Prostate gland (tissue), 2 donors: ENCODE measurements at regions of chr13 and their contacts with region 1.

Region 1: DNA sequence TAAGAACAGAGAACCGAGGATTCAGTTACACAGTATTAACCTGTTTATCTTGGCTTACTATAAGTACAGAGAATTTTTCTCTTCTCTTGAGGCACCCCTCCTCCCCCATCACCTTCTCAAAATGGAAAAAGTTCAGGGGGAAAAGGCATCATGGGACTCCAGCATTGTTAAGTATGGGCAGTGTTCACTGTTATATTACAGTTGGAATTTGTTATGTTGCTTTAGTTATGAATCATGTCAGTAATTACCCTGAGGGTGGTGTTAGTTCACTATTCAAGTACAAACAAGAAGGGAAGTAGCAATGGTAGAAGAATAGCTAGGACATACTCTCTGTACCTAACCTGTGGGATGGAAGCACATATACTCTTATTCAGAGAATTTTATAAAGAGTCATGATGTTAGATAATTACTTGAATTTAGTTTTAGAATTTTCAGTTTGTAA is 12.0 kb downstream of the LPAR6 start:
- DNase-seq: peak; percentile 27
- H3K4me3 ChIP-seq: no peak overlapping the region
- H3K27ac ChIP-seq: peak overlapping the region; percentile 69 to 72
- H3K4me1 ChIP-seq: peaks cover 11% of the 10 kb centered on the region
- H3K27me3 ChIP-seq: no peaks in the 10 kb centered on the region
- CTCF ChIP-seq: peak in 1 of 4 experiments; percentile 29
- POLR2A ChIP-seq: peak; percentile 34

Region 2: GRCh38 chr13:48431987-48432615 is 31.2 kb after region 1 on chr13:
- intact Hi-C with region 1: loop called (anchors 2 kb)
- DNase-seq: no peak
- H3K4me3 ChIP-seq: no peak overlapping the region
- H3K27ac ChIP-seq: peak overlapping the region; percentile 22 to 62
- H3K4me1 ChIP-seq: peaks cover 4% of the 10 kb centered on the region
- H3K27me3 ChIP-seq: no peaks in the 10 kb centered on the region
- CTCF ChIP-seq: no peak
- POLR2A ChIP-seq: no peak

Region 3: GRCh38 chr13:48457578-48458242 is 56.8 kb after region 1 on chr13:
- intact Hi-C with region 1: no loop called
- DNase-seq: no peak
- H3K4me3 ChIP-seq: no peak overlapping the region
- H3K27ac ChIP-seq: no peak overlapping the region
- H3K4me1 ChIP-seq: no peaks in the 10 kb centered on the region
- H3K27me3 ChIP-seq: no peaks in the 10 kb centered on the region
- CTCF ChIP-seq: no peak
- POLR2A ChIP-seq: no peak

Region 4: GRCh38 chr13:48492470-48493065 is 91.7 kb after region 1 on chr13:
- intact Hi-C with region 1: no loop called
- DNase-seq: peak; percentile 30
- H3K4me3 ChIP-seq: no peak overlapping the region
- H3K27ac ChIP-seq: peak overlapping the region; percentile 50 to 54
- H3K4me1 ChIP-seq: no peaks in the 10 kb centered on the region
- H3K27me3 ChIP-seq: no peaks in the 10 kb centered on the region
- CTCF ChIP-seq: no peak
- POLR2A ChIP-seq: no peak

Region 5: DNA sequence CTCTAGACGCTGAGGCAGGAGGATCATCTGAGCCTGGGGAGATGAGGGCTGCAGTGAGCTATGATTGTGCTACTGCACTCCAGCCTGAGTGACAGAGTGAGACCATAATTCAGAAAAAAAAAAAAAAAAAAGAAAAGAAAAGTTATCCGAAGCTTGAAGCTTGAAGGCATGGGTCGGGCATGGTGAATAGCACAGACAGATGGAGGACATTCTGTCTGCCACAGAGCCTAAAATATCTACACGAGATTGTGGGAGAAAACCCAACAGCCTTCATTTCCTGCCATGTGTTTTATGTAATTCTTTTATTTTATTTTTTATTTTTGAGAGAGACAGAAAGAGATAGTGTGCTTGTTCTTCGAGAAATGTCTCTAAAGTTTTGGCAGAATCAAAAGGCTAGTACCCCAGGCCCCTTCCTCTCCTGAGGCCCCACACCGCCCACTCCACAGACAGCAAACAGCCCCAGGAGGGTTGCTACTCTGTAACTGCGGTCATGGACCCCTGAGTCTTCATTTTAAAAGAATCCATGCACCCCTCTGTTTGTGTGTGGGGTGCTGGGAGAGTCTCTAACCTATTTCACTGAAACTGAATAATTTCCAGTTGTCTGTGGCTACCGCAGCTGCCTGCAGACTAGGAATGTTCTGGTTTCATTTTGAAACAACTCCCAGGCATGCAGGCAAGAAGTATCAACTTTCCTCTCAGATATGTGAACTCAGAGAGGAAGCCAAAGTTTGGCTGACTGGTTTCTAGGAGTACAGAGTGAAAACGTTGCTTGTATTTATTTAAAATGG is 170.4 kb after region 1 on chr13:
- intact Hi-C with region 1: loop called (anchors 5 kb)
- DNase-seq: no peak
- H3K4me3 ChIP-seq: no peak overlapping the region
- H3K27ac ChIP-seq: peak overlapping the region; percentile 67 to 71
- H3K4me1 ChIP-seq: no peaks in the 10 kb centered on the region
- H3K27me3 ChIP-seq: no peaks in the 10 kb centered on the region
- CTCF ChIP-seq: no peak
- POLR2A ChIP-seq: no peak

Region 6: DNA sequence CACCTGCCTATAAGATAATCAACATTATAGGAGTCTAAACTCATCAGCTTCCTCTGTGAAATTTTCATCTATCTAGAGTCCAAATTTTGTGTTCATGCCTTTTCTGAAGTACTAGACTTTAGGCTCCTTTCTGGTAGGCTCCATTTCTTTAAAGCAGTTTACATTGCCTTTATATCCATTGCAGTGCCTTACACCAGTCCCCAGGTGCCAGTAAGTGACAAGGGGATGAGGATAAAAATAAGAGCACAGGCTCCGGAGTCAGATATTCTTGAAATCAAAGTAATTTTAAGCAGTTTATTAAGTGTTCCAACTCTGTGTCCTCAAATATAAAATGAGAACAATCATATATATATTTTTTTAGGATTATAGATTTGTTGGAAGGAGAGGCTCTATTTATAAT is 242.3 kb after region 1 on chr13:
- intact Hi-C with region 1: no loop called
- DNase-seq: no peak
- H3K4me3 ChIP-seq: no peak overlapping the region
- H3K27ac ChIP-seq: no peak overlapping the region
- H3K4me1 ChIP-seq: no peaks in the 10 kb centered on the region
- H3K27me3 ChIP-seq: no peaks in the 10 kb centered on the region
- CTCF ChIP-seq: no peak
- POLR2A ChIP-seq: no peak